Dorsolateral prefrontal cortex (tissue), 120 donors: ENCODE measurements at regions of chr5 and their contacts with region 1.

Region 1: GRCh38 chr5:66306105-66306843 is 162.2 kb downstream of the SREK1 start:
- DNase-seq: peak in 5 of 10 donors; percentile 11 to 58 (median 48)
- H3K4me3 ChIP-seq: no peak overlapping the region
- H3K27ac ChIP-seq: no peak overlapping the region
- H3K27me3 ChIP-seq: no peaks in the 10 kb centered on the region
- CTCF ChIP-seq: peak; percentile 33 to 89 (median 77)

Region 2: DNA sequence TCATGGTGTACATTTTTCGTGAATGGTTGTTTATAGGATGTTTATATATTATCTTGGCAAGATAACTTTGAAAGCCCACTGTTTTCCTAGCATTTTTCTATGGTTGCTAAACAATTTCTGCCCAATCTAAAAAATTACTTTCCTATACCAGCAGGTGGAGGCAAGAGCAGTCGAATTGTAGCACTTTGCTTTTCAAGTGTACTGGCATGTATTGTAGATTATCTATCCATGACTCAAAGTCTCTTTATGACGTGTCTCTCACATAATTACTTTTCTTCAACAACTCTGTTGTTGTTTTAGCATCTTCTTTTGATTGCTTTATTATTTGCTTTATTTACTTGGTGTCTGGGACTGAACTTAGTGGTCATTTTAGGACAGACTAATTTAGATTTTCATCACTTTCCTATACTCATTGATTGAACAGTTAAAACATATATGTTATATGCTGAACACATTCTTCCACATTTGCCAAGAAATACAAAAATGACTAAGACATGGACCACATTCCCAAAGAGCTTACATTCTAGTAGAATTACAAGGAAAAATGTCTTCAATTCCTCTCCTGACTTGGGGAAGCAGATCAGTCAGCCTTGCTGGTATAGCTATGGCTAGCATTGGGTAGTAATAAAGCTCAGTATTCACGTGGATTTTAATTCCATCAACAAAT is 563.6 kb before region 1 on chr5:
- intact Hi-C with region 1: loop called in 1 of 2 experiments (anchors 10 kb)
- DNase-seq: no peak
- H3K4me3 ChIP-seq: no peak overlapping the region
- H3K27ac ChIP-seq: no peak overlapping the region
- H3K27me3 ChIP-seq: no peaks in the 10 kb centered on the region
- CTCF ChIP-seq: peak; percentile 31 to 77 (median 62)

Region 3: GRCh38 chr5:66171349-66172344 is 134.6 kb before region 1 on chr5:
- intact Hi-C with region 1: loop called in 1 of 2 experiments (anchors 10 kb)
- DNase-seq: peak in 2 of 10 donors; percentile 11 to 18
- H3K4me3 ChIP-seq: peak overlapping the region in 1 of 59 donors; percentile 22
- H3K27ac ChIP-seq: peak overlapping the region in 7 of 59 donors; percentile 3 to 36 (median 21)
- H3K27me3 ChIP-seq: no peaks in the 10 kb centered on the region
- CTCF ChIP-seq: peak; percentile 45 to 83 (median 70)

Region 4: DNA sequence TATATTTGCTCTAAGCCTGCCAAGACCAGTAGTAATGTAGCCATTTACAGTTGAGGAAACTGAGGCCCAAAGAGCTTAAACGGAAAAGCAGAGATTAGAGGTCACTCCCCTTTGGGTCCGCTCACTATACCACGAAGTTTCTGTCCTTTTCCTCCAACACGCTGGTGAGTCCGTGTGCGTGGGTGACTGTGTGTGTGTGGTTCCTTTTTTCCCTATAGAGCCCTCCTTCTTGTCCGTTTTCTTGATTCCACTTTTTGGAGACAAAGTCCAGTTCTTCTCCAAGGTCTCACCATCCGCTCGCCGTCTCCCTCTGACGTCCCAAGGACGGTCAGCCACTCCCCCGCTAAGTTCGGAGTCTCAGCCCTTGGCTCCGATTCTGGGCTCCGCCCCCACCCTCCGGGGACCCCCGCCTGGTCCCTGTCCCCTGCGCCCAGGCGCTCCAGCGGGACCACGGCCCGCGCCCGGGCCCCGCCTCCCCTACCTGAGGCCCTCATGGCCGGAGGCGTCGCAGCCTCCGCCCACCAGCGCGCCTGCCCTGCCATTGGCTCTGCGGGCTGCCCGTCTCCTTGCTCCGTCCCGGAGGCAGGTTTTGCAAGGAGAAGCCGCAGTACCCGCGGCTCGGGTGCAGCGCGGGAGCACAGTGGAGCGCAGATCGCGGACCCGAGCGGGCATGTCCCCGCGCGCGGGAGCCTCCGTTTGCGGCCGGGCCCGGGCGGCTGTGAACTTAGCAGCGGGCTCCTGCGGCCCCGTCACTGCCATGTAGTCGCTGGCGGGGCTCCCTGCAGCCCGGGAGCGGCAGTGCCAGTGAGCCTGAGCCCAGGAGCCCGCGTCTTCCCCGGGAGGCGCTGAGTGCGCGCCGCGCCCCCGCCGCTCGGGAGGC is 289.7 kb after region 1 on chr5 and contains the start of gene MAST4:
- intact Hi-C with region 1: loop called in 1 of 2 experiments (anchors 5 kb)
- DNase-seq: peak; percentile 44 to 93 (median 82)
- H3K4me3 ChIP-seq: peak within 1 kb of the TSS; percentile 48 to 84 (median 76)
- H3K27ac ChIP-seq: peak within 1 kb of the TSS in 48 of 59 donors; percentile 24 to 90 (median 73)
- H3K27me3 ChIP-seq: peaks cover 0 to 13% (median 0%) of the 10 kb centered on the region in 45 donors
- CTCF ChIP-seq: peak in 1 of 56 donors; percentile 3
- total RNA-seq, gene MAST4: 32.2 to 102 (median 69.2) TPM

Region 5: DNA sequence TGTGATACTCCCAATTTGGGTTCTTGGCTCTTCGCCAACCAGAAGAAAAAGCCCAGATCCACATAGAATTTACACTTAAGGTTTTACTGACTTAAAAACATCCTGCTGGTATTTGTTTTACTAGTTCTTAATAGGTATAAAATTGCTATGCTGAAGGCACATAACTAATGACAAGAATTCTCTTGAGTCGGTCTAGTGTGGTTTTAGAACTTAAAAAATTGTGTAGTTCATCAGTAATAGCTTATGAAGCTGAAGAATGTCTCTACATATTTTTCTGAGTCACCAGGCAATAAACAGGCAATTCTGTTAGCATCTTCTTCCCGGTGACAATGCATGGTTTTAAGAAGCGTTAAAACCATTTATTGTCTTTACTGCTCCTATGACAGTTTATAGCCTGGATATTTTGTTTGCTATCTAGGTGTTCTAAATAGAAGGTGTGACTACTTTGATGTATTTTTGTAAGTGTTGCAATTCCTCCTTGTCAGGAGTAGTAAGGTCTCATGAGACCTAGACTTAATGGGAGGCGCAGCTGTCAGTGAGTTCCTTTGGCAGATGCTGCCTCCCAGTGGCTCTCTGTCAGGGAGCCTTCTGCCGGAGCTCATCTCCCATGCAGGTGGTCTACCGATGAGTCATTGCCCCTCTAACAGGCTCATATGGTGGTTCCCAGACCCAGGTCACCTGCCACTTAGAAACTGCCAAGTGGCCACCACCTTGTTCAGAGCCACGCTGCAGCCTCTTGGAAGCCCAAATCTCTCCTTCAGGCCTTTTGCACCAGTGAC is 463.8 kb after region 1 on chr5:
- intact Hi-C with region 1: loop called in 1 of 2 experiments (anchors 10 kb)
- DNase-seq: peak in 5 of 10 donors; percentile 12 to 46 (median 27)
- H3K4me3 ChIP-seq: no peak overlapping the region
- H3K27ac ChIP-seq: no peak overlapping the region
- H3K27me3 ChIP-seq: no peaks in the 10 kb centered on the region
- CTCF ChIP-seq: peak in 50 of 56 donors; percentile 12 to 68 (median 42)

Region 6: DNA sequence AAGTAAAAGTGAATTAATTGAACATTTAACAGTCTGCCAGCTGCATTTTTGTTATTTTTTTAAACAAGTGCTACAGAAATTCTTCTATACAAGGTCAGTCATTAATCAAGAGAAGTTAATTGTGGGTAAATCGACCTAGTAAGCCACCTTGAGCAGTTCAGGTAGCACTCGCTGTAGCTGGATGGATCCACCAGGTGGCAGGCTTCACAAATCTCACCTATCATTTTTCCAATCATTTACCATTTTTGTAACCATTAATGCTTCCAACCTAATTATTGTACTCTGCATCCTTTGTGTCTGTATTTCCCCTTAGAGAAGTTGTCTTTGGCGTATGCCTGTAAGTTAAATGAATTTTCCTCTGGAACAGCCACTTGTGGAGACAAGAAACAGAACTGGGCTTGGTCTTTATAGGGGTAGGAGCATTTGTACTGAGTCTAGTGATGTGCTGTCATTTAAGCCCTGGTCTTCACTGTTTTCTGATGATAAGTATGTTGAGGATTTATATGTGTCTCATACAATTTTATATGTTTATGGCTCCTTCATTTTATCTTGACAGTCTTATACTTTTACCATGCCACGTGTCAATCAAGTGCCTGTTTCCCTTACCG is 850.8 kb after region 1 on chr5:
- intact Hi-C with region 1: loop called in 1 of 2 experiments (anchors 10 kb)
- DNase-seq: peak in 1 of 10 donors; percentile 27
- H3K4me3 ChIP-seq: no peak overlapping the region
- H3K27ac ChIP-seq: no peak overlapping the region
- H3K27me3 ChIP-seq: no peaks in the 10 kb centered on the region
- CTCF ChIP-seq: peak; percentile 56 to 92 (median 85)